ENCODE measurements at regions of chr20 and their contacts with region 1.

Region 1: DNA sequence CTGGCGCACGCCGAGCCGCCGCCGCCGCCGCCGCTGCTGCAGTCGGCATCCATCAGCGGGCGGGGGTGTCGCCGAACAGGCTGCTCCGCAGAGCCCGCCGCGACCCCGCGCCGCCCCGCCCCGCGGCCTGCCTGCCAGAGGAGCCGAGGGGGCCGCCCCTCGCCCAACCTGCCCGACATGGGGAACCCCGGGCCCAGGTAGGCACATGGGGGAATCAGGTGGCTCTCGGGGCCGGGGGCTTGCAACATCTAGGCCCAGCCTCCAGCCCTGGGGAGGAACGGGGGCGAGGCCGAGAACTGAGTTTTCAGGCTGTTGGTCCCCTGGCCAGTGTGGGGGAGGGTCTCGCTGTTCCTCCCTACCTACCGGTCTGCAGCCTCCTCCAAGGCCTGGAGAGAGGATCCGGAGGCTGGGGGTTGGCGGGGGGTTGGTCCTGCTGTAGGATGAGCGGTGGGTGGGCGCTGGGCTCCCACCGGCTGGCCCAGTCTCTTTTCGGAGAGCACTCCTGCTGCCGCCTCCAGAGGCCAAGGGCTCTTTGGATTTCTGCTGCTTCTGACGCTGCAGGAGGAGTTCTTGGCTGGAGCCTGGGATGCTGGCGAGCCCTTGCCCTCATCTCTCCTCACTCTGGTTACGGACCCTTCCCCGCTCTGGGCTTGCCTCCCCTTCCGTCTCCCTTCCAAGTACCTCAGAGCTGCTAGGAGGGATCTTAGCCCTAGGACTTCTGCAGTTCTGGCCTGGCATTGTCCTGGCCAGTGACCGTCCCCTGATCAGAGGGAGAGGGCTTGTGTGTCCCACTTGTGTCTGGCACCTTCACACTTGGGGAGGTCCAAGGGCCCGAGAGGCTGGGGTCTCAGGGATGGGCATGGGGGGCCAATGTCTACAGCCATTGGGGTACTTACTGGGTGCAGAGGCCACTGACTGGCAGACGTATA is at the start of gene EPB41L1:
- DNase-seq: peak in 1 of 2 donors; percentile 30
- ATAC-seq: peak in 6 of 8 donors; percentile 2 to 7 (median 4)
- H3K4me3 ChIP-seq: peak within 1 kb of the TSS; percentile 43 to 75 (median 67)
- H3K27ac ChIP-seq: peak within 1 kb of the TSS; percentile 36 to 83 (median 72)
- H3K4me1 ChIP-seq: peaks cover 10 to 65% (median 25%) of the 10 kb centered on the region in 9 donors
- H3K27me3 ChIP-seq: peaks cover 0 to 22% (median 0%) of the 10 kb centered on the region in 7 donors
- CTCF ChIP-seq: no peak
- total RNA-seq, gene EPB41L1: 11.1 to 21.7 (median 16.9) TPM

Region 2: DNA sequence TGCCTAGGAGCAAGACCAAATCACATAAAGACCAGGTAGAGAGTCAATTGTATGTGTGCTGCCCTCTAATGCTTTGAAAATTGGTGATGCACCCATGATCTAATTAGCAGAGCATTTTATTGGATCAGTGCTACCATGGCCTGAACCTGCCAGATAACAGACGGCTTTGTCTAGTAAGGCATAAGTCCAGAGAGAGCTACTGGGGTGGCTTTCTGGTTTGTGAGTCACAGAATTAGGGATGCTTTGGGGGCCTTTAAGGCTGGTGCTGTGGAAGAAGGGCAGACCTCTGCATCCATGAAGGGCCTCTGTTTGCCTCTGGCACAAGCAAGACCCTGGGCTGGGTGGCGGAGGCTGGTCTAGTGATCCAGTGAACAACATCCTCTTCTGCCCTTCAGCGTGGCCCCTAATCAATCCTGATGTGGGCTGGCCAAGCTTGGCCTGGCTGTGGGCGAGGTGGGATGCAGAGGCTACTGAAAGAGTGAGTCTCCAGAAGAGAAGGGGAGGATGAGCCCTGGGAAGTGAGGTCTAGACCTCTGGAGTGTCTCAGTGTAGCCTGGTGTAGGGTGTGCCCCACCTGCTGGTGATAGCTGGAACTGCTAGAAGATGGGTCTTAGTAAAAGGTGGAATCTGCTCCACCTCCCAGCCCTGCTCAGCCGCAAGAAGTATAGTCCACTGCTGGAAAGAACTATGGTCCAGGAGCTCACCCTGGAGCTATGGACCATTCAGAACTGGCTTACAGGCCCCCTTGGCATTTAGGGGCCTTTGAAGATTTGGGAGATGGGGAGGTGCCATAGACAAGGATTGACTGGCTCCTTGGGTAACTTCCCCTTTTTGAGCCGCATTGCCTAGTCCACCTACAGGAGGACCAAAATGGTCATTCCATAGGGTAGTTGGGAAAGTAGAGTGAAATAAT is 44.6 kb after region 1 on chr20:
- intact Hi-C with region 1: loop called (anchors 1 to 5 kb)
- DNase-seq: peak; percentile 65 to 81
- ATAC-seq: peak; percentile 57 to 83 (median 76)
- H3K4me3 ChIP-seq: no peak overlapping the region
- H3K27ac ChIP-seq: no peak overlapping the region
- H3K4me1 ChIP-seq: peaks cover 0 to 20% (median 0%) of the 10 kb centered on the region in 9 donors
- H3K27me3 ChIP-seq: no peaks in the 10 kb centered on the region
- CTCF ChIP-seq: peak; percentile 85 to 95 (median 92)